ENCODE measurements at regions of chr13 and their contacts with region 1.

Region 1: GRCh38 chr13:41054919-41055619 is 6.2 kb upstream of the WBP4 start:
- DNase-seq: no peak
- ATAC-seq: no peak

Region 2: GRCh38 chr13:40789275-40790133 is 265.6 kb before region 1 on chr13 and contains the start of gene SLC25A15:
- intact Hi-C with region 1: loop called in 1 of 2 experiments (anchors 5 kb)
- DNase-seq: peak; percentile 90
- ATAC-seq: peak; percentile 97
- total RNA-seq, gene SLC25A15: 4.7 to 4.9 TPM

Region 3: GRCh38 chr13:40982772-40983171 is 72.3 kb before region 1 on chr13:
- intact Hi-C with region 1: loop called in 1 of 2 experiments (anchors 5 kb)
- DNase-seq: peak; percentile 47
- ATAC-seq: peak; percentile 78

Measured in left cardiac atrium (tissue), 4 donors.